Activated CD4-positive, alpha-beta memory T cell treated with anti-CD3 and anti-CD28 coated beads for 36 hours (primary cell): ENCODE measurements at regions of chr2 and their contacts with region 1.

Region 1: GRCh38 chr2:168118733-168119514 is 128.5 kb downstream of the STK39 start:
- DNase-seq: no peak
- H3K4me3 Mint-ChIP-seq: no peak overlapping the region
- H3K27ac Mint-ChIP-seq: no peak overlapping the region
- H3K4me1 Mint-ChIP-seq: no peaks in the 10 kb centered on the region
- H3K27me3 Mint-ChIP-seq: no peaks in the 10 kb centered on the region

Region 2: GRCh38 chr2:166539340-166540162 is 1579.4 kb before region 1 on chr2:
- CTCF ChIA-PET with region 1: interaction called, 15 read pairs
- POLR2A ChIA-PET with region 1: no interaction called
- intact Hi-C with region 1: loop called (anchors 2 kb)
- DNase-seq: no peak
- H3K4me3 Mint-ChIP-seq: no peak overlapping the region
- H3K27ac Mint-ChIP-seq: no peak overlapping the region
- H3K4me1 Mint-ChIP-seq: no peaks in the 10 kb centered on the region
- H3K27me3 Mint-ChIP-seq: peaks cover 3% of the 10 kb centered on the region

Region 3: DNA sequence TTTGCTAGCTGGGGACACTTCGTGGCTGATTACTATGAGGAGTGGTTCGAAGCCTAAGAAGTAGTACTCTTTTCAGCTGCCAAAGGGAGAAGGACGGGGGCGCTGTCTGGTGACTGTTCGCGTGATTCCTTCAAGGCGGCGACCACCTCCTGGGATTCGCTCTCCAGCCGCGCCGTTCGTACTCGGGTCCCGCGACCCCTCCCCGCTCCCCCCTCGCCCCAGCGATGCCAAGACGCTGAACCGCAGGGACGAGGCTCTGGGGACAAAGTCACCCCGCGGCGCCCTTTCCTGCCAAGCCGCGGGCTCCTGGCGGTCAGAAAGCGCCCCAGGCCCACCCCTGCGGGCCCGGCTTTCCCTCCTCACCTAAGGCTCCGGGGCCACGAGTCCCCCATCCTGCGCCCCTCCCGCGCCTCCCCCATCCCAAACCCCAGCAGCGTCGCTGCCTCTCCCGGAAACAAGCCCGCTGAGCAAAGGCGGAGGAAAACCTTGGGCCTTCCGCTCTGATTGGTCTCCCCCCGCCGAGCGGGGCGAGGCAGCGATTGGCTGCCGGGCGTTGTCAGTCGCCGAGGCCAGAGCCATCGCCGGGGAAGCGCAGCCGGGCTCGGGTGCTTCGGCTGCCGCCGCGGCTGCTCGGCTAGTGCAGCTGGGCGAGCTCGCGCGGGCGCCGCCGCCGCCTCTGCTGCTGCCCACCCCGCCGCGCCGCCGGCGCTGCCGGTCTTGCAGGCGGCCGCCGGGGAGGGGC is 826.3 kb before region 1 on chr2:
- CTCF ChIA-PET with region 1: no interaction called
- POLR2A ChIA-PET with region 1: no interaction called
- intact Hi-C with region 1: loop called (anchors 10 kb)
- DNase-seq: peak; percentile 77
- H3K4me3 Mint-ChIP-seq: peak within 1 kb of the TSS; percentile 67
- H3K27ac Mint-ChIP-seq: no peak within 1 kb of the TSS
- H3K4me1 Mint-ChIP-seq: peaks cover 16% of the 10 kb centered on the region
- H3K27me3 Mint-ChIP-seq: peaks cover 34% of the 10 kb centered on the region

Region 4: DNA sequence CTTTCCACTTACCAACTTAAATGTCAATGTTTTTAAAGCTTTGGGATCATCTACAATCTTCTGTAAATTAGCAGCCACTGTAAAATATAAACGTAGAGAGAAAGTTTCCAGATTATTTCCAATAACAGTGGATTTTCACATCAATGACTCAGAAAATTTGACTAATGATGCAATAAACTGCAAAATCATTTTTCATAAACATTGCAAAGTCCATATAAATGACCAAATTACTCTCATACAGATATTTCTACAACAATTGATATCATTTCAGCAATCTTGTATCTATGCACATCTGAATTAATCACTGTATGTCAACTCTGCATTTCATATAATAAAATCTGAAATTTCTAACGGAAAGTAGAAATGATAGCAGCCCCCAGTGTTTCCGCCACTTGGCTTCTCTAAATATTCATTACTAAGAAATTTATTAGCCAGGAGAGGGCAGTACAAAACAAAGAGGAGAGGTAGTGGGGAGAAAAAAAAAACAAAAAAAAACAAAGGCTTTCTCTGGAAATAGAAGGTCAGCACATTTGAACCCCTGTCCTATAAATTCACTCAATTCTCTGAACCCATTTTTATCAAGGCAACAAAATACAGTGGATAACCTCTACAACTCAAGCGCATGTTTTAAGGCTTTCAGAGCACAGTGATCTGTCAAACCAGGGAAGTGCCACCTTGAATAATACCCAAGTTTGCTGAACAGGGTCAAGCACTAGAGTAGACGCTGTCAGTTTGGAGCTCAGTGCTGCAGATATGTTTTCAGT is 154.1 kb before region 1 on chr2:
- CTCF ChIA-PET with region 1: interaction called, 11 read pairs
- POLR2A ChIA-PET with region 1: no interaction called
- intact Hi-C with region 1: loop called (anchors 2 kb)
- DNase-seq: no peak
- H3K4me3 Mint-ChIP-seq: no peak overlapping the region
- H3K27ac Mint-ChIP-seq: no peak overlapping the region
- H3K4me1 Mint-ChIP-seq: peaks cover 11% of the 10 kb centered on the region
- H3K27me3 Mint-ChIP-seq: no peaks in the 10 kb centered on the region

Region 5: DNA sequence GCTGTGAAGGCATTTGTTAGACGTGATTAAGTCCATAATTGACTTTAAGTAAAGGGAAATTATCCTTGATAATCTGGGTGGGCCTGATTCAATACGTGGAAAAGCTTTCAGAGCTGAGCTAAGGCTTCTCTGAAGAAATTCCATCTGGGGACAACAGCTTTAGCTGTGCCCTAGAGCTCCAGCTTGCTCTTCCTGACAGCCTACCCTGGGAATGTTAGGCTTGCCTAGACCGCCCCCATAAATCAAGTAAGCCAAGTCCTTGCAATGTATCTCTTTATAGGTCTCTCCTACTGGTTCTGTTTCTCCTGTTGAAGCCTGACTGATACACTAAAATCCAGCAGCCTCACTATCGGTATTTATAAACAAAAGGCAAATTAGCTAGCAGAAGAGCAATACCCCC is 31.5 kb before region 1 on chr2:
- CTCF ChIA-PET with region 1: interaction called, 10 read pairs
- POLR2A ChIA-PET with region 1: no interaction called
- intact Hi-C with region 1: no loop called
- DNase-seq: no peak
- H3K4me3 Mint-ChIP-seq: no peak overlapping the region
- H3K27ac Mint-ChIP-seq: no peak overlapping the region
- H3K4me1 Mint-ChIP-seq: peaks cover 25% of the 10 kb centered on the region
- H3K27me3 Mint-ChIP-seq: no peaks in the 10 kb centered on the region

Region 6: GRCh38 chr2:168107322-168107721 is 11.6 kb before region 1 on chr2:
- CTCF ChIA-PET with region 1: interaction called, 50 read pairs
- POLR2A ChIA-PET with region 1: no interaction called
- intact Hi-C with region 1: no loop called
- DNase-seq: no peak
- H3K4me3 Mint-ChIP-seq: no peak overlapping the region
- H3K27ac Mint-ChIP-seq: no peak overlapping the region
- H3K4me1 Mint-ChIP-seq: no peaks in the 10 kb centered on the region
- H3K27me3 Mint-ChIP-seq: no peaks in the 10 kb centered on the region